ENCODE measurements at regions of chr15 and their contacts with region 1.

Region 1: DNA sequence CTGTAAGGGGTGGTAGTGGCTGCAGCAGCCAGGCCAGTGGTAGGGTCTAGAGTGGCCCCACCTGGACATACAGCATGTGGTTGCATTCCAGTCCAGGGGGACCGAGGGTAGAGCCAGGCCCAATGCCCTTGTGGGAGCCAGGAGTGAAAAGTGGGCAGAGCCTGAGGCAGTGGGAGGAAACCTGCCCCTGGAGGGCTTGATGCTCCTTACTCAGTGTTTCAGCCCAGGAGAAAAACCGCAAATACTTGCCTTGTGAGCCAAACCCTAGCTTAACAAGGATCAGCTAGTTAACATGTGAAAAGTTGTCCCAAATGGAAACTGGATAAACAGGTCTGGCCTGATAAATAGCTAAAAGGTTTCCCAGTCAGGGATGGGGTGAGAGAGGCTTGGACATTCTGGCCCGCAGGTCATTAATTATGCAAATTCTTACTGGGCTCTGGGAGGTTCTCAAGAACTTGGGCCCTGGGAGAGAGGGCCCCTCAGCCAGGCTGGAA is 222.0 kb downstream of the THSD4 start:
- DNase-seq: peak; percentile 80 to 97
- H3K4me3 ChIP-seq: peak overlapping the region; percentile 42; the same call in 1 of the 2 replicates
- H3K27ac ChIP-seq: peak overlapping the region; percentile 97
- H3K4me1 ChIP-seq: peaks cover 60% of the 10 kb centered on the region
- H3K27me3 ChIP-seq: no peaks in the 10 kb centered on the region
- CTCF ChIP-seq: no peak

Region 2: GRCh38 chr15:70998319-70998718 is 338.9 kb before region 1 on chr15:
- CTCF ChIA-PET with region 1: no interaction called
- POLR2A ChIA-PET with region 1: no interaction called
- intact Hi-C with region 1: no loop called
- DNase-seq: no peak
- H3K4me3 ChIP-seq: no peak overlapping the region
- H3K27ac ChIP-seq: no peak overlapping the region
- H3K4me1 ChIP-seq: no peaks in the 10 kb centered on the region
- H3K27me3 ChIP-seq: no peaks in the 10 kb centered on the region
- CTCF ChIP-seq: no peak

Region 3: GRCh38 chr15:71011503-71012155 is 325.6 kb before region 1 on chr15:
- CTCF ChIA-PET with region 1: no interaction called
- POLR2A ChIA-PET with region 1: no interaction called
- intact Hi-C with region 1: loop called (anchors 1 kb)
- DNase-seq: peak in 1 of 2 experiments; percentile 21
- H3K4me3 ChIP-seq: no peak overlapping the region
- H3K27ac ChIP-seq: no peak overlapping the region
- H3K4me1 ChIP-seq: no peaks in the 10 kb centered on the region
- H3K27me3 ChIP-seq: no peaks in the 10 kb centered on the region
- CTCF ChIP-seq: peak; percentile 83

Region 4: DNA sequence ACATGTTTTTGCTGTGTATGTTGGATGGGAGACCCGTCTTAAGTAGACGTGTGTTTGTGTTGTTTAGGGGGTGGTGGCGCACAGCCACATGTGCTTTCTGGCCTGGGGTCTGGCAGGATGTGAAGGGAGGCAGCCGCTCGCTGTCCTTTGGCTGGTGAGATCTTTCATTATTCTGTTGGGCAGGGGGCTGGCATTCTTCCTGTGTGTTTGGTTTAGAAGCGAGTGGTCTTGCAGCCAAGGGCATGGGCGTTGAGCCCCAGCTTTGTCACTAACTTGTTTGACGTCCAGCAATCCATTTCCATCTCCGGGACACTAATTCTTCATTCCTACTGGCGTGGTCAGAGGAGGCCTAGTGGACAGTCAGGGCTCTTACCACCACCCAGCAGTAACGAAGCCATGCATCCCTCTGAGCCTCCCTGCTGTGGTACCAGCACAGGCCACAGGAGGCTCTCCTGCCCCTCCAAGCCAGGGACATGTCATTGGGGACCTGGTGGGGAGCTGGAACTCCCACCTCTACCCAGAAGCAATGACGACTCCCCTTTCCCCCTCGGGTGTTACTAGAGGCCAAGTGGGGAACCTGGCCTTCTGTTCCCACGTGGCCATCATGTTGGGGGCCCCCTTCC is 211.3 kb before region 1 on chr15:
- CTCF ChIA-PET with region 1: interaction called, 10 read pairs
- POLR2A ChIA-PET with region 1: no interaction called
- intact Hi-C with region 1: no loop called
- DNase-seq: no peak
- H3K4me3 ChIP-seq: no peak overlapping the region
- H3K27ac ChIP-seq: no peak overlapping the region
- H3K4me1 ChIP-seq: peaks cover 20% of the 10 kb centered on the region
- H3K27me3 ChIP-seq: no peaks in the 10 kb centered on the region
- CTCF ChIP-seq: peak; percentile 29; the same call in 1 of the 2 replicates

Region 5: DNA sequence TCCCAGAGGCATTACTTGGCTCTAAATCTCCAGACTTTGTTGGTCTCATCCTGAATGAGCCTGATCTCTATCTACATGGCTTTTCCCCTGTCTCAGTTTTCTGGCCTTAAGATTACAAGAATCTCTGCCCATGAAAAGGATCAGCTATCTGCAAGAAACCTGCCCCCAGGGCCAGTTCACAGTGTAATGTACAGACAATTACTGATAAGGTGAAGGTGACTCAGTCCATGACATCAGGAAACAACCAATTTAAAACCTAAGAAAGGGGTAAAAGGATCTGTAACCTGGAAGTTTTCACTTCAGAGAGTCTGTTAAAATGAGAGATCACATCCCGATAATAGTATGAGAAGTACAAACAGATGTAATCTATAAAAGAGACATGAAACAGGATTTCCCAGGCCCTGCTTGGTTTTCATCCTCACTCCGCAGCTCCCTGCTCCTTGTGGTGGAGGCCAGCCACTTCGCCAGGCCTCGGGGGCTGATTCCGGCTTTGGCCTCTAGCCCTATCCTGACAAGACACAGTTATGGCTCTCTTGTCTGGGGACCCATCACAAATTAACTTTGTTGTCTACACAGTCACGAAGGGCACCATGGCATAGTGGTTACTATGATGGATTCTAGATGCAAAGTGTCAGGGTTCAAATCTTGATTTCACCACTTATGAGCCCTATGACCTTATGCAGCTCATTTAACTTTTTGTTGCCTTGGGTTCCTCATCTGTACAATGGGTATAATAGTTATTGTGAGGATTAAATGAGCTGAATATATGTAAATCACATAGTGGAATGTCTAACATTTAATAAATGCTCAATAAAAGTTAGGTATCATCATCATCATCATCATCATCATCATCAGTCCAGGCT is 85.0 kb before region 1 on chr15:
- CTCF ChIA-PET with region 1: no interaction called
- POLR2A ChIA-PET with region 1: interaction called, 4 read pairs
- intact Hi-C with region 1: loop called (anchors 2 kb)
- DNase-seq: peak; percentile 82 to 96
- H3K4me3 ChIP-seq: no peak overlapping the region; the same call in 1 of the 2 replicates
- H3K27ac ChIP-seq: peak overlapping the region; percentile 90
- H3K4me1 ChIP-seq: peaks cover 37% of the 10 kb centered on the region
- H3K27me3 ChIP-seq: no peaks in the 10 kb centered on the region
- CTCF ChIP-seq: no peak

Region 6: DNA sequence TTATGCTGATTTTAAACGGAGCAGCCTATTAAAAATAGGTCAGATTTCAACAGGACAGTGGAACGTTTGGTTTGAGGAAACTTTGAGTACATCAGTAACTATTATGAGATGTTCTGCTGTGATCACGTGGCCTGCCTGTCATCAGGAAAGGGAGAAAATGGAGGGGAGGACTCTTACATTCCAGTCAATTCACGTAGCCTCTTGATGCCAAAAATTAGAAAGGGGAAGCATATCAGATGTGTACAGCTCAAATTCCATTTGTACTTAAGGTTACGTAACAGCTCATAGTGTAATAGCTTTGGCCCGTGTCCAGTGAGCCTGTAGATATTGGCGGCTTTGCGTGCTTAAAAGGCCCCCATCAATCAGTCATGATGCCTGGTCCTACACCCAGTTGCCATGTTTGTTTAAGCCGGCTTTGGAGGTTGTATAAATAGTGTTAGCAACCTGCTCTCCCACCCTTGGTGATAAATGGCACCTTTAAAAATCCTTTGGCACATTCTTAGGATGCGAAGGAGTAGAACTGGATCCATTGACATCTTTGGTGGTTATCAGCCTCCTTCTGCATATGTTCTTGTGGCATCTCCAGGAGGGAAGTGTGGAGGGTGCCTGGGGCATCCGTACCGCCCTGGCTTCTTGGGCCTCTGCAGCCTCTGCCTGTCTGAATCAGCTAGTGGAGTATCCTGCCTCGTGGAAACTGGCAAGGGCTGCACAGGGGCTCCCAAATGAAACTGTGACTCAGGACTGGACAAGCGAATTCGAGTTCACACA is 58.1 kb before region 1 on chr15:
- CTCF ChIA-PET with region 1: no interaction called
- POLR2A ChIA-PET with region 1: no interaction called
- intact Hi-C with region 1: loop called (anchors 5 kb)
- DNase-seq: peak; percentile 77 to 96
- H3K4me3 ChIP-seq: 0 out of 2 replicates have a peak overlapping the region, but pooled peaks have one; percentile 10
- H3K27ac ChIP-seq: peak overlapping the region; percentile 99
- H3K4me1 ChIP-seq: peaks cover 75% of the 10 kb centered on the region
- H3K27me3 ChIP-seq: no peaks in the 10 kb centered on the region
- CTCF ChIP-seq: no peak

Region 7: DNA sequence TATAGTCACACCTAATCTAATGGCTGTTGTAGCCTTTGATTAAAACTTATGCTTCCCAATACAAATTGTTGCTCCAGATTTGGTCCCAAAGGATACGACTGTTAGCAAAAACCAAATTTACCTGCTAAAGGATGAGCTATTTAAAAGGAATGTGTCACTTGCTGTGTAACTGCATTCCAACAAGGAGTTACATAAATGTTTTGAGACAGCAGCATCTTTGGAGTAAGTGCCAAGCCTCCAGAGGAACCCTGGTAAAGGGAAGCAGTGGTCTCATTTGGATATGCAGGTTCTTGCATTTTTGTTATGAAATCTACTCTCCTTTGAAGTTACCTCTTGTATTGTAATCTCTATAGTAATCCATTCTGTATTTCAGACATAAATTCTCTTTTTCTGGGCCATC is 11.4 kb after region 1 on chr15:
- CTCF ChIA-PET with region 1: interaction called, 6 read pairs
- POLR2A ChIA-PET with region 1: interaction called, 3 read pairs
- intact Hi-C with region 1: loop called (anchors 1 kb)
- DNase-seq: peak; percentile 17 to 84
- H3K4me3 ChIP-seq: no peak overlapping the region
- H3K27ac ChIP-seq: peak overlapping the region; percentile 70
- H3K4me1 ChIP-seq: peaks cover 27% of the 10 kb centered on the region
- H3K27me3 ChIP-seq: no peaks in the 10 kb centered on the region
- CTCF ChIP-seq: no peak

Region 8: GRCh38 chr15:71455107-71455506 is 117.9 kb after region 1 on chr15:
- CTCF ChIA-PET with region 1: no interaction called
- POLR2A ChIA-PET with region 1: no interaction called
- intact Hi-C with region 1: no loop called
- DNase-seq: peak in 1 of 2 experiments; percentile 39
- H3K4me3 ChIP-seq: no peak overlapping the region
- H3K27ac ChIP-seq: no peak overlapping the region
- H3K4me1 ChIP-seq: peaks cover 14% of the 10 kb centered on the region
- H3K27me3 ChIP-seq: no peaks in the 10 kb centered on the region
- CTCF ChIP-seq: no peak